ENCODE measurements at regions of chr11 and their contacts with region 1.

Region 1: DNA sequence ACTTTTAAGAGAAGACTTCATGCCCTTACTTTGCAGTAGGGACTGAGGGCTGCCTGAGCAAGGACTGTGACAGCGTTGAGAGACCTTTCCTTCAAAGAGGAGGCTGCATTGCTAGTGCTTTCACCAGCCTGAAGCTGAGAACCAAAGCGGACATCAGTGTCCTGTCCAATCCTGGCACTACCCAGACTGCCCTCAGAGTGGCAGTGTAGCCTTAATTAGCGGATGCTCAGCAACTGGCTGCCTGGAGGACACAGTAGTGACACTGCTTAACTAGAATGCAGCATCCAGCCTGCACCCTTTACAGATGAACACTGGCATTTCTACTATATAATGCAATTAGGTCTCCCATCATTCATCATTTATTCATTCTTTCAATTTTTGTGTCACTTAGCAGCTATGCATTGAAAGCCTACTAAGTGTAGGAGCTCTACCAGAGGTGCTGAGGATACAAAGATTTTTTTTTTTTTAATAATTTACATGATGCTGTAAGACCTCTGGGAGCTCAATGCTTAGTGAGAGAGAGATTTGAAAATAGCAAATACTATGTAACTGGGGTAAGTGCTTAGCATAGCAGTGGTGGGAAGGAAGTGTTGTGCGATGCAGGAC is 36.9 kb upstream of the SLC36A4 start:
- DNase-seq: peak; percentile 64 to 85 (median 81)
- H3K4me3 ChIP-seq: no peak overlapping the region
- H3K27ac ChIP-seq: no peak overlapping the region
- H3K4me1 ChIP-seq: no peaks in the 10 kb centered on the region
- H3K27me3 ChIP-seq: peaks cover 0 to 10% (median 4%) of the 10 kb centered on the region in 5 experiments

Region 2: GRCh38 chr11:93248602-93249001 is 13.9 kb after region 1 on chr11:
- CTCF ChIA-PET with region 1: interaction called, 10 read pairs
- POLR2A ChIA-PET with region 1: no interaction called
- DNase-seq: peak in 2 of 3 donors; percentile 12 to 17
- H3K4me3 ChIP-seq: no peak overlapping the region
- H3K27ac ChIP-seq: no peak overlapping the region
- H3K4me1 ChIP-seq: no peaks in the 10 kb centered on the region
- H3K27me3 ChIP-seq: no peaks in the 10 kb centered on the region

Region 3: DNA sequence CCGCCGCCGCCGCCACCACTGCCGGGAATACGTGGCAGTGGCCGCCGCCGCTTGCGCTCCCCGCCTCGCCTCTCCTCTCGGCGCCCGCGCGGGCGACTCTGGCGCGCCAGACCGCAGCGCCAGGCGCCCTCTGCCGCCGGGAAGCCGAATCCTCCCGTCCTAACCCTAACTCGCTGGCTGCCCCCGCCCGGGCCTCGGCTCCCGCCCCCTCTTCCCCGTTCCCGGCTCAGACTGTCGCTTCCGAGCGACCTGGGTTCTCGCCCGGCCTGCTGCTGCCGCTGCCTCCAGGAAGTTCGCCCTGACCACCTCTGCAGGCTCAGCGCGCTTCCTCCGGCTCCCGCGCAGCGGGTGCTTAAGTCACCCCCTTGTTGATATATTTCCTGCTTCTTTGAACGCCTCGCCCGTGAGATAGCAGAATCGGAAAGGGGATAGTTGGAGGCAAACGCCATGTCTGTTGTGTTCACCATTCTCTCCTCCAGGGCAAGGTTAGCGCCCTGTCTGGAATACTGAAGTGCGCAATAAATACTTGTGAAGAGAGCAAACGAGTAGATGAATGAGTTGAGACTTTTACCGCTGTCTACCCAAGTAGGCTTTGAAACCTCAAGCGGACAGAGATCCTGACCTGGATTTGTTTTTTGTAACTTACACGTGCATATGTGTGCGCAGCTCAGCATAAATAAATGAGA is 308.7 kb after region 1 on chr11 and contains the start of gene SMCO4:
- CTCF ChIA-PET with region 1: interaction called, 16 read pairs
- POLR2A ChIA-PET with region 1: no interaction called
- DNase-seq: peak; percentile 77 to 82 (median 80)
- H3K4me3 ChIP-seq: peak within 1 kb of the TSS; percentile 48 to 87 (median 73)
- H3K27ac ChIP-seq: peak within 1 kb of the TSS in 1 of 2 experiments; percentile 43
- H3K4me1 ChIP-seq: peaks cover 0 to 42% (median 24%) of the 10 kb centered on the region in 4 experiments
- H3K27me3 ChIP-seq: no peaks in the 10 kb centered on the region

Region 4: DNA sequence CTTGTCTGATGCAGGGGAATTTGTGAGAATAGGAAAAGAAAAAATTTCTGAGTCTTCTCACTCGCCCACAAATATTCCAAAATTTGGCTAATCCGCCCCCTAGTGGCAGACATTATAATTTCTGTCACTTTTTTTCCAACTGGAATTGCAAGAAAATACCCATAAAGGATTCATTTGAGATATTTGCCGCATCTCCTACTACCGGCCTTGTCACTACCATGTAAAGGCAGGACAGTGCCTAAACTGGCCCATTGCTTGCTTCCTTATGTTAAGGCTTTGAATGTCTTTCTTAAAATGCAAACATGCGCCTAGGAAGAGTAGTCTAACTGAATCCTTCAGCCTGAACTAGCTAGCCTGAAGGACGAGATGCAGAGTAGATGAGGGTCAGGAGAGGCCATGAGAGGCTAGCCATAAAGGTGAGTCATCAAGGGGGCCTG is 417.5 kb after region 1 on chr11:
- CTCF ChIA-PET with region 1: interaction called, 63 read pairs
- POLR2A ChIA-PET with region 1: no interaction called
- DNase-seq: peak; percentile 38 to 65 (median 51)
- H3K4me3 ChIP-seq: no peak overlapping the region
- H3K27ac ChIP-seq: no peak overlapping the region
- H3K4me1 ChIP-seq: peaks cover 10 to 22% (median 15%) of the 10 kb centered on the region in 4 experiments
- H3K27me3 ChIP-seq: peaks cover 0 to 4% (median 0%) of the 10 kb centered on the region in 5 experiments

Measured in common myeloid progenitor, CD34-positive (primary cell).